CD4-positive, alpha-beta memory T cell (primary cell): ENCODE measurements at regions of chr2 and their contacts with region 1.

Region 1: GRCh38 chr2:37877457-37878315 is 47.4 kb upstream of the RMDN2 start:
- DNase-seq: peak in 4 of 5 donors; percentile 45 to 57 (median 52)
- H3K4me3 ChIP-seq: no peak overlapping the region
- H3K4me3 Mint-ChIP-seq: no peak overlapping the region
- H3K27ac ChIP-seq: no peak overlapping the region
- H3K27ac Mint-ChIP-seq: no peak overlapping the region
- H3K4me1 ChIP-seq: no peaks in the 10 kb centered on the region
- H3K4me1 Mint-ChIP-seq: no peaks in the 10 kb centered on the region
- H3K27me3 ChIP-seq: no peaks in the 10 kb centered on the region
- H3K27me3 Mint-ChIP-seq: peaks cover 2 to 7% of the 10 kb centered on the region in 2 donors

Region 2: DNA sequence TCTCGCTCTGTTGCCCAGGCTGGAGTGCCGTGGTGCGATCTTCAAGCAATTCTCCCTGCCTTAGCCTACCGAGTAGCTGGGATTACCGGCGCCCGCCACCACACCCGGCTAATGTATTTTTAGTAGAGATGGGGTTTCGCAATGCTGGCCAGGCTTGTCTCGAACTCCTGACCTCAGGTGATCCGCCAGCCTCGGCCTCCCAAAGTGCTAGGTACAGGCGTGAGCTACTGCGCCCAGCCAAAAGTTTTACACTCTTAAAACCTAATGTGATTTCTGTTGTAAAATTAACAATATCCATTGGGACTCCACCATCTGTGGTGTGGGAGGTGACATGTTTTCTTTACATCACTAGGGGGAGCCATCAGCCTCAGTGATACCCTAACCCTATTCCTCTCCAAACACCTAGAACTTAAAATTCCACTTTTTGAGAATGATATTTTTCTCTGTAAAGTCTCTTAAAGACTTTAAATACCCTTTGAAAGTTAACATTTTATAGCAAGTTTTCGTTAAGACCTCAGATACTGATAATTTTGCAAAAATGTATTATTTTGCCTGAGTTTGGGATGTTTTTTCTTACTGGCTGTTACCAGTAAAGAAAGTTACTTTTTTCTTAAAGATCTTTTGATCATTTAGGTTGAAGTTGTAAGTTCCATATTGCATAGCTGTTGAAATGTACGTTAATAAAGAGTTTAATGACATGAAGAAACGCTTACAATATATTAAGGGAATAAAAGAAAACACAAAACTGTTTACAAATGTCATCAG is 709.3 kb before region 1 on chr2:
- CTCF ChIA-PET with region 1: interaction called, 22 read pairs
- POLR2A ChIA-PET with region 1: no interaction called
- intact Hi-C with region 1: loop called (anchors 1 kb)
- DNase-seq: peak in 4 of 5 donors; percentile 32 to 45 (median 36)
- H3K4me3 ChIP-seq: no peak overlapping the region
- H3K4me3 Mint-ChIP-seq: no peak overlapping the region
- H3K27ac ChIP-seq: no peak overlapping the region
- H3K27ac Mint-ChIP-seq: no peak overlapping the region
- H3K4me1 ChIP-seq: no peaks in the 10 kb centered on the region
- H3K4me1 Mint-ChIP-seq: no peaks in the 10 kb centered on the region
- H3K27me3 ChIP-seq: no peaks in the 10 kb centered on the region
- H3K27me3 Mint-ChIP-seq: no peaks in the 10 kb centered on the region

Region 3: GRCh38 chr2:37421686-37422085 is 456.0 kb before region 1 on chr2:
- CTCF ChIA-PET with region 1: interaction called, 162 read pairs
- POLR2A ChIA-PET with region 1: no interaction called
- intact Hi-C with region 1: no loop called
- DNase-seq: no peak
- H3K4me3 ChIP-seq: no peak overlapping the region
- H3K4me3 Mint-ChIP-seq: no peak overlapping the region
- H3K27ac ChIP-seq: no peak overlapping the region
- H3K27ac Mint-ChIP-seq: no peak overlapping the region
- H3K4me1 ChIP-seq: no peaks in the 10 kb centered on the region
- H3K4me1 Mint-ChIP-seq: no peaks in the 10 kb centered on the region
- H3K27me3 ChIP-seq: no peaks in the 10 kb centered on the region
- H3K27me3 Mint-ChIP-seq: peaks cover 0 to 2% of the 10 kb centered on the region in 2 donors

Region 4: GRCh38 chr2:37837628-37838328 is 39.9 kb before region 1 on chr2:
- CTCF ChIA-PET with region 1: interaction called, 72 read pairs
- POLR2A ChIA-PET with region 1: interaction called, 5 read pairs
- intact Hi-C with region 1: loop called (anchors 1 kb)
- DNase-seq: no peak
- H3K4me3 ChIP-seq: no peak overlapping the region
- H3K4me3 Mint-ChIP-seq: no peak overlapping the region
- H3K27ac ChIP-seq: no peak overlapping the region
- H3K27ac Mint-ChIP-seq: peak overlapping the region in 1 of 7 donors; percentile 42
- H3K4me1 ChIP-seq: peaks cover under 1% of the 10 kb centered on the region
- H3K4me1 Mint-ChIP-seq: peaks cover 0 to under 1% (median under 1%) of the 10 kb centered on the region in 4 donors
- H3K27me3 ChIP-seq: no peaks in the 10 kb centered on the region
- H3K27me3 Mint-ChIP-seq: peaks cover 0 to 5% of the 10 kb centered on the region in 2 donors

Region 5: GRCh38 chr2:37865640-37866039 is 12.0 kb before region 1 on chr2:
- CTCF ChIA-PET with region 1: interaction called, 33 read pairs
- POLR2A ChIA-PET with region 1: no interaction called
- intact Hi-C with region 1: no loop called
- DNase-seq: no peak
- H3K4me3 ChIP-seq: no peak overlapping the region
- H3K4me3 Mint-ChIP-seq: no peak overlapping the region
- H3K27ac ChIP-seq: no peak overlapping the region
- H3K27ac Mint-ChIP-seq: no peak overlapping the region
- H3K4me1 ChIP-seq: no peaks in the 10 kb centered on the region
- H3K4me1 Mint-ChIP-seq: no peaks in the 10 kb centered on the region
- H3K27me3 ChIP-seq: no peaks in the 10 kb centered on the region
- H3K27me3 Mint-ChIP-seq: peaks cover 14 to 24% of the 10 kb centered on the region in 2 donors

Region 6: DNA sequence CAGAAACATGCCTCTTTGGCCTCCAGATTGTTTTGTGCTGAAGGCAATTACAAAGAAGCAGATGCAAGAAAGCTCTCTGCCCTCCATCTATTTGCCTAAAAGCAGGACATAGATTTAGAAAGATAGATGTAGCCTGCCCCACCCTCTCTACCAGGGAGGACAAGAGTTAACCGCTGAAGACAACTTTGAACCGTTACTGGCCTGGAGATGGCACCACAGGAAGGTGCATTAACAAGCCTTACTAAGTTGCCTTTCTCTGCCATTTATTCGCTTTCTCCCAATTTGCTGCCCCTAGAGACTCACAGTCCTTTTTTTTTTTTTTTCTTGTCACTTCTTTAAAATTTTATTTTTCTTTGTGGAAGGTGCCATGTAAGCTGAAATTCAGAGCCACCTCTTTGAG is 18.6 kb after region 1 on chr2:
- CTCF ChIA-PET with region 1: interaction called, 23 read pairs
- POLR2A ChIA-PET with region 1: no interaction called
- intact Hi-C with region 1: no loop called
- DNase-seq: no peak
- H3K4me3 ChIP-seq: no peak overlapping the region
- H3K4me3 Mint-ChIP-seq: no peak overlapping the region
- H3K27ac ChIP-seq: no peak overlapping the region
- H3K27ac Mint-ChIP-seq: no peak overlapping the region
- H3K4me1 ChIP-seq: peaks cover 27% of the 10 kb centered on the region
- H3K4me1 Mint-ChIP-seq: peaks cover 25 to 31% (median 29%) of the 10 kb centered on the region in 4 donors
- H3K27me3 ChIP-seq: no peaks in the 10 kb centered on the region
- H3K27me3 Mint-ChIP-seq: no peaks in the 10 kb centered on the region

Region 7: GRCh38 chr2:37934591-37935513 is 57.2 kb after region 1 on chr2:
- CTCF ChIA-PET with region 1: no interaction called
- POLR2A ChIA-PET with region 1: no interaction called
- intact Hi-C with region 1: no loop called
- DNase-seq: peak in 1 of 5 donors; percentile 12
- H3K4me3 ChIP-seq: peak overlapping the region in 1 of 2 donors; percentile 13
- H3K4me3 Mint-ChIP-seq: peak overlapping the region; percentile 2 to 82 (median 75)
- H3K27ac ChIP-seq: no peak overlapping the region
- H3K27ac Mint-ChIP-seq: peak overlapping the region in 3 of 7 donors; percentile 5 to 63 (median 22)
- H3K4me1 ChIP-seq: peaks cover 16% of the 10 kb centered on the region
- H3K4me1 Mint-ChIP-seq: peaks cover 20 to 38% (median 28%) of the 10 kb centered on the region in 4 donors
- H3K27me3 ChIP-seq: no peaks in the 10 kb centered on the region
- H3K27me3 Mint-ChIP-seq: peaks cover 0 to 8% of the 10 kb centered on the region in 2 donors